B cell (primary cell): ENCODE measurements at regions of chr18 and their contacts with region 1.

Region 1: DNA sequence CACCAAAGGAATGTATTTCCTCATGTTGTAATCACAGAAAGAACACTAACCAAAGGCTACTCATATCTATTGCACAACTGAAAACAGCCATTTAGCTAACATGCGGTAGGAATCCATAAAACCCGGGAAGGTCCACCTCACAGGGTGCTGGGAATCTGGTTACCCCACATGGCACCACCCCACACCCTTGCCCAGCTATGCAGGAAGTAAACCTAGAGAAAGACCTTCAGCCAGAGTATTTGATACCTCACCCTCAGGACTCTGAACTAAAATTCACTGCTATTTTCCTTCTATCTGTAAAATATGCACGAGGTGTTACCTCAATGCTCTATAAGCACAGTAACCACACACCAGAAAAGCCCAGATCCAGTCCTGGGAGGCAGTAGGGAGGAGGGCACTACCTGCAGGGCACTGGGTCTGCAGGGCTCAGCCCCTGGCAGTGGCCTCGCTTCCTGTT is 45.8 kb downstream of the PTPN2 start:
- DNase-seq: peak; percentile 31
- ATAC-seq: no peak
- H3K4me3 ChIP-seq: peak overlapping the region in 2 of 5 experiments; percentile 15 to 38
- H3K4me3 Mint-ChIP-seq: peak overlapping the region; percentile 65
- H3K27ac ChIP-seq: peak overlapping the region; percentile 51 to 76
- H3K27ac Mint-ChIP-seq: peak overlapping the region; percentile 74
- H3K4me1 ChIP-seq: peaks cover 30 to 36% of the 10 kb centered on the region in 2 donors
- H3K4me1 Mint-ChIP-seq: peaks cover 39% of the 10 kb centered on the region
- H3K27me3 ChIP-seq: no peaks in the 10 kb centered on the region
- H3K27me3 Mint-ChIP-seq: no peaks in the 10 kb centered on the region
- CTCF ChIP-seq: no peak

Region 2: GRCh38 chr18:11851146-11851805 is 986.9 kb before region 1 on chr18 and contains the start of gene CHMP1B:
- CTCF ChIA-PET with region 1: no interaction called
- POLR2A ChIA-PET with region 1: no interaction called
- intact Hi-C with region 1: loop called (anchors 2 kb)
- DNase-seq: peak; percentile 98
- ATAC-seq: peak; percentile 94
- H3K4me3 ChIP-seq: peak within 1 kb of the TSS; percentile 85 to 100 (median 98)
- H3K4me3 Mint-ChIP-seq: peak within 1 kb of the TSS; percentile 100
- H3K27ac ChIP-seq: peak within 1 kb of the TSS; percentile 93 to 97
- H3K27ac Mint-ChIP-seq: peak within 1 kb of the TSS; percentile 99
- H3K4me1 ChIP-seq: peaks cover 28 to 31% of the 10 kb centered on the region in 2 donors
- H3K4me1 Mint-ChIP-seq: peaks cover 34% of the 10 kb centered on the region
- H3K27me3 ChIP-seq: no peaks in the 10 kb centered on the region
- H3K27me3 Mint-ChIP-seq: no peaks in the 10 kb centered on the region
- CTCF ChIP-seq: no peak
- total RNA-seq, gene CHMP1B: 52.2 and 55.4 TPM in 2 replicates

Region 3: DNA sequence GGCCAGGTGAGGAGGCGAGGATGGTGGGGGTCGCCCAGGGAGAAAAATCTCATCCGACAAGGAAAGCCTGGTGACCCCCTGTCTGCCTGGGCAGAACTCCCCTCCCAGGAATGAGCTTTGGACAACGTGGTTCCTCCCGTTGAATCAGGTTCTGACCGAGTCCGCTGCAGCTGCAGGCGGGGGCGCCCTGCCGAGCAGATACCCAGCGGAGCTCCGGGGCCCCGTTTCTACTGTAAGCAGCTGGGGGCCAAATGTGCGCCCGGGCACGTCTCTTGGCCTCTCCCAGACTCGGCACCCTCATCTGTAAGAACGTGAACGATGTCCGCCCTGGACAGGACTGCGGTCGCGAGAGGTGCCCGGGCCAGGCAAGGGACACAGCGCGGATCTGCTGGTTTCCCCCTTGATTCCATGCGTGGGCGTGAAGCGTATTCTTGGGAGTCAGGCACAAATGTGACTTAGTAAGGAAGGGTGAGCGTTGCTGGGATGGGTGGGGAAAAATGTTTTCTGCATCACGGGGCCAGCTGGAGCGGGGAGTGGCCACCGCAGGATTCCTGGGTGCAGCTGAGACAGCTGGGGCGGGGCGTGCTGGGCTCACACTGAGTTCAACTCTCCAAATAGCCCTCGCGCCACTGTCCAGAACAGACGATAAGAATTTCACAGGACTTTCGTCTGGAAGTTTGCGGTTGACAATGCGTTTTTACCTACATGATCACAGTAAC is 550.4 kb before region 1 on chr18:
- CTCF ChIA-PET with region 1: no interaction called
- POLR2A ChIA-PET with region 1: no interaction called
- intact Hi-C with region 1: no loop called
- DNase-seq: no peak
- ATAC-seq: no peak
- H3K4me3 ChIP-seq: peak overlapping the region in 2 of 5 experiments; percentile 17 to 27
- H3K4me3 Mint-ChIP-seq: peak overlapping the region; percentile 76
- H3K27ac ChIP-seq: no peak overlapping the region
- H3K27ac Mint-ChIP-seq: no peak overlapping the region
- H3K4me1 ChIP-seq: peaks cover 14% of the 10 kb centered on the region in 2 donors
- H3K4me1 Mint-ChIP-seq: peaks cover 8% of the 10 kb centered on the region
- H3K27me3 ChIP-seq: peaks cover 0 to 43% (median 15%) of the 10 kb centered on the region in 4 experiments
- H3K27me3 Mint-ChIP-seq: peaks cover 43% of the 10 kb centered on the region
- CTCF ChIP-seq: no peak

Region 4: GRCh38 chr18:12408247-12408869 is 429.8 kb before region 1 on chr18:
- CTCF ChIA-PET with region 1: no interaction called
- POLR2A ChIA-PET with region 1: no interaction called
- intact Hi-C with region 1: loop called (anchors 5 kb)
- DNase-seq: peak; percentile 47
- ATAC-seq: no peak
- H3K4me3 ChIP-seq: peak overlapping the region in 4 of 5 experiments; percentile 49 to 74 (median 60)
- H3K4me3 Mint-ChIP-seq: peak overlapping the region; percentile 90
- H3K27ac ChIP-seq: no peak overlapping the region
- H3K27ac Mint-ChIP-seq: peak overlapping the region; percentile 65
- H3K4me1 ChIP-seq: peaks cover 9 to 18% of the 10 kb centered on the region in 2 donors
- H3K4me1 Mint-ChIP-seq: peaks cover 18% of the 10 kb centered on the region
- H3K27me3 ChIP-seq: peaks cover 0 to 25% (median 0%) of the 10 kb centered on the region in 4 experiments
- H3K27me3 Mint-ChIP-seq: peaks cover 14% of the 10 kb centered on the region
- CTCF ChIP-seq: no peak

Region 5: GRCh38 chr18:12702221-12703095 is 135.7 kb before region 1 on chr18 and contains the starts of genes CEP76 and PSMG2:
- CTCF ChIA-PET with region 1: no interaction called
- POLR2A ChIA-PET with region 1: no interaction called
- intact Hi-C with region 1: loop called (anchors 5 kb)
- DNase-seq: peak; percentile 96
- ATAC-seq: peak; percentile 85
- H3K4me3 ChIP-seq: peak within 1 kb of the TSS; percentile 84 to 95 (median 86)
- H3K4me3 Mint-ChIP-seq: peak within 1 kb of the TSS; percentile 99
- H3K27ac ChIP-seq: peak within 1 kb of the TSS; percentile 96 to 100
- H3K27ac Mint-ChIP-seq: peak within 1 kb of the TSS; percentile 100
- H3K4me1 ChIP-seq: peaks cover 22 to 26% of the 10 kb centered on the region in 2 donors
- H3K4me1 Mint-ChIP-seq: peaks cover 37% of the 10 kb centered on the region
- H3K27me3 ChIP-seq: no peaks in the 10 kb centered on the region
- H3K27me3 Mint-ChIP-seq: no peaks in the 10 kb centered on the region
- CTCF ChIP-seq: no peak
- total RNA-seq, gene CEP76: 10.0 and 12.6 TPM in 2 replicates
- total RNA-seq, gene PSMG2: 61.2 and 64.1 TPM in 2 replicates

Region 6: DNA sequence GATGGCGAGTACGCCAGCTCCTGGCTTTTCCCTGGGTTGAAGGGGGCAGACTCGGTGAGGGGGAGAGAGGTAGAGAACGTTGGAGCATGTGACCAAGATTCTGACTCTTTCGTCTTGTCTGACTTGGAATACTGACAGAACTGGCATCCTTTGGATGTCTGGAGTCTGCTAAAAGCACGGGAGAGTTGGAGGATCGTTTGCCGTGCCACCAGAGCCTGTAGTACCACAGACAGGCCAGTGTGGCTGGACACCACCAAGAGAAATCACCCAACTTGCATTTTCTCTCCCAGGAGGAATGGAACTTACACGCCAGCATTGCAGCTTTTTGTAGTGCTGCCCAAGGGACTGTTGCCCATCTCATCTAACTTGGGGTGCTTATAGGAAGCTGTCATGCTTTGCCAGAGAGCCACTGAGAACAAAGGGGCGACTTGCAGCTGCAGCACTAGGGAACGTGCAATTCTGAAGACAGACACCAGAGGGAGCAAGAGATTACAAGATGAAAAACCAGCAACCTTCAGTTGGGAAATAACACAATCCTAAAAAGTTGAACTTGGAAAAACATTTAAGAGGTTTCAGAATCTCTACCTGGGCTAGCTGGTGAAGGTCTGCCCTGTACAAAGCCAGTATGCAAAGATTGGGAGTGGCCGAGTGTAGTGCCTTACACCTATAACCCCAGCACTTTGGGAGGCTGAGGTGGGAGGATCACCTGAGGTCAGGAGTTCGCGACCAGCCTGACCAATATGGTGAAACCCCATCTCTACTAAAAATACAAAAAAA is 111.2 kb before region 1 on chr18:
- CTCF ChIA-PET with region 1: no interaction called
- POLR2A ChIA-PET with region 1: no interaction called
- intact Hi-C with region 1: loop called (anchors 10 kb)
- DNase-seq: peak; percentile 77
- ATAC-seq: peak; percentile 61
- H3K4me3 ChIP-seq: no peak overlapping the region
- H3K4me3 Mint-ChIP-seq: no peak overlapping the region
- H3K27ac ChIP-seq: no peak overlapping the region
- H3K27ac Mint-ChIP-seq: no peak overlapping the region
- H3K4me1 ChIP-seq: no peaks in the 10 kb centered on the region
- H3K4me1 Mint-ChIP-seq: no peaks in the 10 kb centered on the region
- H3K27me3 ChIP-seq: no peaks in the 10 kb centered on the region
- H3K27me3 Mint-ChIP-seq: no peaks in the 10 kb centered on the region
- CTCF ChIP-seq: peak; percentile 93

Region 7: DNA sequence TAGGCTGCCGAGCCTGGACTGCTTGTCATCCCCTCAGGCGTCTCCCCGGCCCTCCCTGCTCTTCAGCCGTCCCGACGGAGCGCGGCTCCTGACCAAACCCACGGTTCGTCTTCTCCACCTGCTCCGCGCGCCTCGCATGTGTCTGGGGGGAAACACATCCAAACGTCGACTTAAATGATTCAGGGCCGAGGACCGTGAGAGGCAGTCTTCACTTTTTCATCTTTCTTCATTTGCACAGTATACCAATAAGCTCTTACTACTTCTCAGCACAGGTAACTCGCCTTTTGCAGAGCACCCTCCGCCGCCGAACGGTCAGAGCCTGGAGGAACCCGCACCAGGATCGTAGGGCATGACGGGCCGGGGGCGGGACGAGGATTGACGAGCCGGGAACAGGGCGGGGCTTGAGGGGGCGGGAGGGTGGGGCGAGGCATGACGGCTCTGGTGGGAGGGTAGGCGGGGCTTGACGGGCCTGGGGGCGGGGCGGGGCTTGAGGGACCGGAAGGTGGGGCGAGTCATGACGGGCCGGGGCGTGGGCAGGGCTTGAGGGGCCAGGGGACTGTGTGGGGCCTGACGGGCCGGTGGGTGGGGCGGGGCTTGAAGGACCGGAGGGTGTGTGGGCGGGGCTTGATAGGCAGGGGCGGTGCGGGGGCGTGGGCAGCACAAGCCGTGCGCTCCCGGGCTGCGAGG is 109.3 kb after region 1 on chr18 and contains the start of gene SEH1L:
- CTCF ChIA-PET with region 1: no interaction called
- POLR2A ChIA-PET with region 1: no interaction called
- intact Hi-C with region 1: loop called (anchors 1 kb)
- DNase-seq: no peak
- ATAC-seq: peak; percentile 91
- H3K4me3 ChIP-seq: peak within 1 kb of the TSS; percentile 69 to 97 (median 75)
- H3K4me3 Mint-ChIP-seq: peak within 1 kb of the TSS; percentile 96
- H3K27ac ChIP-seq: peak within 1 kb of the TSS; percentile 88 to 89
- H3K27ac Mint-ChIP-seq: peak within 1 kb of the TSS; percentile 94
- H3K4me1 ChIP-seq: peaks cover 5 to 22% of the 10 kb centered on the region in 2 donors
- H3K4me1 Mint-ChIP-seq: peaks cover 29% of the 10 kb centered on the region
- H3K27me3 ChIP-seq: no peaks in the 10 kb centered on the region
- H3K27me3 Mint-ChIP-seq: no peaks in the 10 kb centered on the region
- CTCF ChIP-seq: no peak
- total RNA-seq, gene SEH1L: 46.4 and 48.1 TPM in 2 replicates